ENCODE measurements at regions of chr16 and their contacts with region 1.

Region 1: DNA sequence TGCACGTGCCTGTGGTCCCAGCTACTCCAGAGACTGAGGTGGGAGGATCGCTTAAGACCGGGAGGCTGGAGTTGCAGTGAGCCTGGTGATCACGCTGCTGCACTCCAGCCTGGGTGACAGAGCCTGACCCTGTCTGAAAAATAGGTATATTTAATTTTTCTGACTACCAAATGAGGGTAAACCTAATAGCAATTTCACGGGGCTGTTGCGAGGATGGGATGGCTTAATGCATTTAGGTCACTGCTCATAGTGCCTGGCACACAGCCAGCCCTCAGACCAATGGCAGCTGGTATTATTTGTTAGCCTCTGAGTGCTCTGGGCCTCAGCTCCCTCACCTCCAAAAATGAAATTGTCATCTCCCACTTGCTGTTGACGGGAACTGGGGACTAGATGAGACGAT is 5.9 kb upstream of the CDIP1 start:
- DNase-seq: no peak
- ATAC-seq: no peak
- H3K4me3 Mint-ChIP-seq: no peak overlapping the region
- H3K27ac Mint-ChIP-seq: no peak overlapping the region
- H3K4me1 Mint-ChIP-seq: peaks cover 4% of the 10 kb centered on the region
- H3K27me3 Mint-ChIP-seq: peaks cover 1% of the 10 kb centered on the region
- CTCF ChIP-seq: no peak

Region 2: DNA sequence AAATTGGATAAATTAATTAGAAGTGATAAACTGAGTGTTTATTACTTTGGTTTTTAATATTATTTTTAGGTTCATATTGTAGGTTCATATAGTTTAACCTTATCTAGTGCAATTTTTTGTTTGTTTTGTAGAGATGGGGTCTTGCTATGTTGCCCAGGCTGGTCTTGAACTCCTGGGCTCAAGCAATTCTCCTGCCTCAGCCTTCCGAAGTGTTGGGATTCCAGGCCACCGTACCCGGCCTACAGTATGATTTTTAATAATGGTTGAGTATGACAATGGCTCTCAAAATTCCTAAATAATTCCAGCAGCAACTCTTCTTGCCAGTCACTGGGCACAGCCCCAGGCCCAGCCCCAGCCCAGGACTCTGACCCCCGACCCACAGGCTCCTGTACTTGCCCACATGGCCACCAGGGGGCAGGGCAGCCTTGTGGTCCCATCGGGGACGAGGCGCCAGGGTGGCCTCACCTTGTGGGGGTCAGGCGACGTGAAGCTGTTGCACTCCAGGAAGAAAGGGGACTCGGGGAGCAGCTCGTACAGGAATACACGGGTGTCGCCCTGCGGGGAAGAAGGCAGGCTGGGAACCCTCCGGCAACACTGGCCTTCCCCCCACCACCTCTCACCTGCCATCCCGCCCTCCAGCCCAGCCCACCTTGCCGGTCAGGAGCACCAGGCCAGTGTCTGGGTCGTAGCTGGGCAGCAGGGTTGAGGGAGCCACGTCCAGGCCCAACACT is 185.5 kb before region 1 on chr16:
- CTCF ChIA-PET with region 1: no interaction called
- POLR2A ChIA-PET with region 1: no interaction called
- intact Hi-C with region 1: loop called (anchors 1 kb)
- DNase-seq: peak; percentile 68
- ATAC-seq: peak; percentile 83
- H3K4me3 Mint-ChIP-seq: no peak overlapping the region
- H3K27ac Mint-ChIP-seq: no peak overlapping the region
- H3K4me1 Mint-ChIP-seq: peaks cover 13% of the 10 kb centered on the region
- H3K27me3 Mint-ChIP-seq: no peaks in the 10 kb centered on the region
- CTCF ChIP-seq: peak; percentile 56

Region 3: GRCh38 chr16:4580245-4580644 is 35.8 kb after region 1 on chr16:
- CTCF ChIA-PET with region 1: no interaction called
- POLR2A ChIA-PET with region 1: no interaction called
- intact Hi-C with region 1: no loop called
- DNase-seq: no peak
- ATAC-seq: no peak
- H3K4me3 Mint-ChIP-seq: no peak overlapping the region
- H3K27ac Mint-ChIP-seq: no peak overlapping the region
- H3K4me1 Mint-ChIP-seq: no peaks in the 10 kb centered on the region
- H3K27me3 Mint-ChIP-seq: peaks cover 3% of the 10 kb centered on the region
- CTCF ChIP-seq: no peak